ENCODE measurements at regions of chr11 and their contacts with region 1.

Region 1: GRCh38 chr11:86802601-86803051 is 2.3 kb downstream of the PRSS23 start:
- DNase-seq: no peak
- H3K4me3 Mint-ChIP-seq: peak overlapping the region; percentile 92
- H3K27ac Mint-ChIP-seq: peak overlapping the region; percentile 69
- H3K4me1 Mint-ChIP-seq: peaks cover 77% of the 10 kb centered on the region
- H3K27me3 Mint-ChIP-seq: peaks cover 24% of the 10 kb centered on the region

Region 2: DNA sequence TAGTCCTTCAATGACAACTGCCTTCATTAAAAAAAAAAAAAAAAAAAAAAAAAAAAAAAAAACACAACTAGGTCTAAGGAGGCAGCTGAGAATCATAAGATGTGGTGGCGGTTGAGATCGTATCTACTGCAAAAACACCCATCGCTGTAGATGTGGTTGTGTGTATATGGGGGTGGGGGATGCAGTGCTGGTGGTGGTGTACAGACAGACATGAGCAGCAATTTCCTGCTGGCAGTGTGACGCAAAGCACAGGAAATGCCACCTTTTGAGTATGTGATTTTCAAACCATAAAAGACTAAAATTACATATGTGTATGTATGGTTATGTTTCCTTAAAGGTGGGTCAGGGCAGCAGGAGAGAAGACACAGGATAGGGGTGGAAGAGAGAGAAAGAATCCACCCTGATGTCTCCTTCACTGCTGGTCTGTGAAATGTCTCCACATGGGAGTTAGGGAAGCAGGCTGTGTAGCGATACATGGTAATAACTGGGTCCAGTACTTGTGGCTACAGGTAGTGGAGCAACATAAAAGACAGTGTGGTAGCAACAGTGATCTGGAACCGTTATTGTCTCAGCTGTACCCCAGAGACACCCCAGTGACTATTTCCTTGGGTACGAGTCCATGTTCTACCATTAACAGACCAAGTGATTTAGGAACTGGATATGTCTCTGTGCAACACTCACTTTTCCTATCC is 1049.6 kb before region 1 on chr11:
- intact Hi-C with region 1: loop called (anchors 5 kb)
- DNase-seq: peak; percentile 89
- H3K4me3 Mint-ChIP-seq: peak overlapping the region; percentile 73
- H3K27ac Mint-ChIP-seq: peak overlapping the region; percentile 98
- H3K4me1 Mint-ChIP-seq: peaks cover 99% of the 10 kb centered on the region
- H3K27me3 Mint-ChIP-seq: peaks cover 4% of the 10 kb centered on the region

Region 3: DNA sequence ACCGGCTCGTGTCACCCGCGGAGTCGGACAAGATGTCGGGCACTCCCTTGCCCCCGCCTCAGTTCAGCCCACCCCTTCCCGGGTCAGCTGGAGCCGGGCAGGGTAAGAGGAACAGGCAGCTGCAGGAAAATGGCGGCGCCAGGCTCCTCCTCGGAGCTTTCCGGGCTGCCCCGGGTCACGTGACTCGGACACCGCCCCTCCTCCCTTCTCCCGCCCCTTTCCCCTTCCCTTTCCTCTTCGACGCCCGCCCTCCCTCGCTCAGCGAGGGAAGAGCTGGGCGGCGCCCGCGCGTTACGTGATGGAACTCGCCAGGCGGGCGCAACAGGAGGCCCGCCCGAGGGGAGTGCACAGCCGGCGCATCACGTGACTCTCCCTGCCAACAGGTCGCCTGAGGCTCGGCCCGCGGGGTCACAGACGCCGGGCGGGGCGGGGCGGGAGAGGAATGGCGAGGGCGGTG is 733.6 kb before region 1 on chr11 and contains the start of gene PICALM:
- intact Hi-C with region 1: loop called (anchors 5 kb)
- DNase-seq: peak; percentile 97
- H3K4me3 Mint-ChIP-seq: peak within 1 kb of the TSS; percentile 92
- H3K27ac Mint-ChIP-seq: peak within 1 kb of the TSS; percentile 97
- H3K4me1 Mint-ChIP-seq: peaks cover 33% of the 10 kb centered on the region
- H3K27me3 Mint-ChIP-seq: no peaks in the 10 kb centered on the region
- total RNA-seq, gene PICALM: 174 and 177 TPM in 2 replicates

Region 4: DNA sequence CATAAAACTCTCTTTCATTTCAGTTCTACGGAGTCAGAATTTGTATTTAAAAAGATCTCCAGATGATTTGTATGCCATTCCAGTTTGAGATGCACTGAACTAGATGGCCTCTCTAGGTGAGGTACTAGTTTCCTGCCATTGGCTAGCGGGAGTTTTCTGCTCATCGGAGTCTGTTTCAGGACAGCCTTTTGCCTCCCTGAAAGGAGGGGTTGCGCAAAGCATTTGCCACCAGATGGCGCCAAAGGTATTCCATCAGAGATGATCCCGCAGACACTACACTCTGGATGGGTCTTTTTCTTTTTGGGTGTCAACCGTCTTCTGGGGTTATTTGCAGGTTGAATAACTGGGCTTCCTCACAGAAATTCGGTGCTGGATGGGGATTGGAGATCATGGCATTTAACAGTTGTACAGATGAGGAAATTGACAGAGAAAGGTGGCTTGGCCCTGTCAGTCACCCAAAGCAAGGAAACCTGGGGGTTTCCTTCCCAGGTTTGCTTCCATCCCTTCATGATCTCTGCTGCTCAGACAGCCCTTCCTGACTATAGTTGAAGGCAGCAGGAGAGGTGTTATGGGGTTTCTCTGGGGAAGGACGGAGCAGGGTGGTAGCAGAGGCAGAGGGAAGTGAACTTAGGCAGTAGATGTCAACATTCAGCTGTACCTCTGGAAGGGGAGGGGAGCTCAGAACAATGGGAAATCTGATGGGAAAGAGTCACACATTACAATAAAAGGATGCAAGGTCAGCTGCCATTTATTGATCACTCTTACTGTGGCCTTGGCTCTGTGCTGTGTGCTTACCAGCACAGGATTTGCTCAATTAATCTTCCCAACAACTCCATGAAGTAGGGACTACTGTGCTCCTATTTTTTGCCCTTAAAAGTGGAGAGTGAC is 346.3 kb before region 1 on chr11:
- intact Hi-C with region 1: loop called (anchors 2 kb)
- DNase-seq: peak; percentile 71
- H3K4me3 Mint-ChIP-seq: no peak overlapping the region
- H3K27ac Mint-ChIP-seq: peak overlapping the region; percentile 40
- H3K4me1 Mint-ChIP-seq: peaks cover 75% of the 10 kb centered on the region
- H3K27me3 Mint-ChIP-seq: no peaks in the 10 kb centered on the region

Region 5: GRCh38 chr11:86608251-86608799 is 194.3 kb before region 1 on chr11:
- intact Hi-C with region 1: loop called (anchors 2 kb)
- DNase-seq: peak; percentile 22
- H3K4me3 Mint-ChIP-seq: no peak overlapping the region
- H3K27ac Mint-ChIP-seq: no peak overlapping the region
- H3K4me1 Mint-ChIP-seq: peaks cover 30% of the 10 kb centered on the region
- H3K27me3 Mint-ChIP-seq: peaks cover 3% of the 10 kb centered on the region

Region 6: DNA sequence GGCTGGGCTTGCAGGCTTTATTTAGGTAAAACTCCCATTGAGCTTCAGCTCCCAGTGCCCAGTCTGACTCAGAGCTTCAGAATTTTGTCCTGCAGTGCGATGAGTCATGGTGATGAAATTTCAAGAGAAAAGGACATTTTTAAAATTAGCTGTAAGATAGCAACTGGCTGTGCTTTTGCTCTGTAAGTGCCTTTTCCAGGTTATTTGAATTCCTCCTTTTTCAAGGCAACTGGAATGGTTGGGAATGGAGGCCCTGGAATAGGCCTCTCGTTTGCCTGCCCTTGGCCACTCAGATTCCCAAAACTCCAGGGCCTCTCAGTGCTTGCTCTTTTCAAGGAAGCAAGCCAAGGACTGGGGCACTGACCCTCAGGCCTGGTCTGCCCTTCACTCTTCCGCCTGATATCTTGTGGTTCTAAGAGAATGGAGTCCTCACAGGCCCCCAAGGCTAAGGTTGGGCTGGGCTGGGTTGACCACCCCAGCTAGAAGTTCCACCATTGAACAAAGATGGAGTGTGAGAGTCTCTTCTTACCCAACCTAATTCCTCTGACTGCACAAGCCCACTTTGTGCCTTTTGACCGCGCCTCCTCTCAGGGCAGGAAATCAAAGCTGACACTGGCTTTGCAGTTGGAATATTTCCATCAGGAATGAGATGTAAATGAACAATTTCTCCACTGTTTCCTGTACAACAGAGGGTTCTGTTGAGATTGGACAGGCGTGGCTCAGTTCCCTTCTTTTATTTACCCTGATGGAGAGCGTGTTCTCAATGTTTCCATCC is 61.7 kb before region 1 on chr11:
- intact Hi-C with region 1: loop called (anchors 1 kb)
- DNase-seq: no peak
- H3K4me3 Mint-ChIP-seq: no peak overlapping the region
- H3K27ac Mint-ChIP-seq: no peak overlapping the region
- H3K4me1 Mint-ChIP-seq: peaks cover 41% of the 10 kb centered on the region
- H3K27me3 Mint-ChIP-seq: no peaks in the 10 kb centered on the region

Region 7: DNA sequence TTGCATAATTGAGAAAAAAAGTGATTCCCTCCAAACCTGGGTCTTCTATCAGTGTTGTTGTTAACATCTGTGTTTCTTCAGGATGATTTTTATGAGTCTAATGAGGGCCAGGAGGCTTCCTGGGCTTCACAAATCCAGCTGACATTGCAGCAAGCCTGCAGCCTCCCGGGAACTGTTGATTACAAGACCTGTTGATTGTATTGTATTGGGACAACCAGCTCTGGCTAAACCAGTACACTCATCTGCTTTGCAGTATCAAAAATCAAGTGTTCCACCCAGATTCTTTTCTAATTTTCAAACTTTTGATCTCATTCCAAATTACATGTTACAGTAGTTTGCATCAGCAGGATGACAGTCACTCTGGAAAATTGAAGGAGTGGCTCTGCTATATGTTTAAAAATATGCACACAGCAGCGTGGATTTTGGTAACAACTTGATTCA is 18.4 kb before region 1 on chr11:
- intact Hi-C with region 1: no loop called
- DNase-seq: no peak
- H3K4me3 Mint-ChIP-seq: no peak overlapping the region
- H3K27ac Mint-ChIP-seq: no peak overlapping the region
- H3K4me1 Mint-ChIP-seq: no peaks in the 10 kb centered on the region
- H3K27me3 Mint-ChIP-seq: peaks cover 40% of the 10 kb centered on the region

Region 8: GRCh38 chr11:86923999-86924766 is 121.6 kb after region 1 on chr11:
- intact Hi-C with region 1: no loop called
- DNase-seq: no peak
- H3K4me3 Mint-ChIP-seq: no peak overlapping the region
- H3K27ac Mint-ChIP-seq: no peak overlapping the region
- H3K4me1 Mint-ChIP-seq: no peaks in the 10 kb centered on the region
- H3K27me3 Mint-ChIP-seq: peaks cover 13% of the 10 kb centered on the region

Measured in activated T-helper 1 cell treated with anti-CD3 and anti-CD28 coated beads, Interleukin-12 subunit alpha, Interleukin-12 subunit beta, Interleukin-2, Interleukin-4 antibody, amounts not matched to agents 30 ng/mL and 10 ng/mL and 1 ng/mL, durations not matched to agents 14 hours and 24 hours and 36 hours (primary cell).